ENCODE measurements at regions of chr11 and their contacts with region 1.

Region 1: DNA sequence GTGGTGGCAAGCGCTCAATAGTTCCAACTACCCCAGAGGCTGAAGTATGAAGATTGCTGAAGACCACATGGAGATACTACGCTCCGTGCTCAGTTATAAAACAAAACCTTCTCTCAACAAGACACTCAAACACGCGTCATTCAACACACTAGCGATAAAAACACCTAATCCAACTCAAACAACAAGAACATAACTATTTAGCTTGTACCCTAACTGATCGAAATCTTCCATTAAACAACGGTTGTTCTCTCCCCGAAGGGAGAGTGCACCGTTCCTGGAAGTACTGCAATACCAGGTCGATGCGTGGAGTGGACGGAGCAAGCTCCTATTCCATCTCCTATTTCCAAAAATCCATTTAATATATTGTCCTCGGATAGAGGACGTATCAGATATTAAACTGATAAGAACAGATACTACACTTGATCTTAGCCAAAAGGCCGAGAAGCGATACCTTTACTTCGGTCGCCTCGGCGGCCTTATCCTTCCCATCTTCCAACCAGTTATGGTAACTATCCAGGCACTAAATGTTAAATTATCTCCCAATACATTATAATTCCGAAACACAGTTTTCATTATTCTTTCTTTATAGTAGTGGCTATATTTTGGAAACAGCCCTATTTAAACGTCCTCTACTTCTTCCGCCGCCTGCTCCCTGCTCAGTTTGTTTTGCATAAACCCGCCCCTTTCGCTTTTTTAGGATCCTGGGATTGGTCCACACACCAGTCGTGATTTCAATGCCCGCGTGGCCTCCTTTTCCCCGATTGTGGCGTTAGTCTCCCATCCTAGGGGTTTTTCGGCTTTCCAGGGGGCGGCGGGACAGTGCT is 2.2 kb upstream of the WDR74 start:
- DNase-seq: peak; percentile 92 to 100
- H3K4me3 ChIP-seq: peak overlapping the region; percentile 89
- H3K27ac ChIP-seq: peak overlapping the region; percentile 94
- H3K4me1 ChIP-seq: peaks cover 17% of the 10 kb centered on the region
- H3K27me3 ChIP-seq: no peaks in the 10 kb centered on the region
- CTCF ChIP-seq: no peak

Region 2: DNA sequence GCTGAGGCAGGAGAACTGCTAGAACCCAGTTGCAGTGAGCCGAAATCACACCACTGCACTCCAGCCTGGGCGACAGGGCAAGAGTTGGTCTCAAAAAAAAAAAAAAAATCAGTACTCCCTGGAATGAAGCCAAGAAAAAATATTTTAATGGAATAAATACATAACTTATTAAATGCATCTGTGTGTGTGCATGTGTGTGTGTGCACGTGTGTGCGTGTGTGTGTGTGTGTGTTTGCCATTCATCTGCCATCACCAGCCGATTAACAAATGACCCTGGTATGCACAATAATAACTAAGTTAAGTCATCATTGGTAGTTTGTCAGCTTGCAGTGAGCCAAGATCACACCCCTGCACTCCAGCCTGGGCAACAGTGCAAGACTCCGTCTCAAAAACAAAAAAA is 457.8 kb before region 1 on chr11:
- CTCF ChIA-PET with region 1: no interaction called
- POLR2A ChIA-PET with region 1: no interaction called
- intact Hi-C with region 1: loop called (anchors 2 kb)
- DNase-seq: no peak
- H3K4me3 ChIP-seq: no peak overlapping the region
- H3K27ac ChIP-seq: no peak overlapping the region
- H3K4me1 ChIP-seq: no peaks in the 10 kb centered on the region; the same call in none of the 2 replicates
- H3K27me3 ChIP-seq: no peaks in the 10 kb centered on the region
- CTCF ChIP-seq: no peak

Region 3: GRCh38 chr11:62573592-62574362 is 267.8 kb before region 1 on chr11 and contains the start of gene EEF1G:
- CTCF ChIA-PET with region 1: no interaction called
- POLR2A ChIA-PET with region 1: interaction called, 10 read pairs
- intact Hi-C with region 1: no loop called
- DNase-seq: peak; percentile 100
- H3K4me3 ChIP-seq: peak within 1 kb of the TSS; percentile 92
- H3K27ac ChIP-seq: peak within 1 kb of the TSS; percentile 86
- H3K4me1 ChIP-seq: peaks cover 42% of the 10 kb centered on the region
- H3K27me3 ChIP-seq: no peaks in the 10 kb centered on the region
- CTCF ChIP-seq: no peak
- total RNA-seq, gene EEF1G: 1,773 and 2,008 TPM in 2 replicates

Region 4: GRCh38 chr11:62705880-62706849 is 135.4 kb before region 1 on chr11:
- CTCF ChIA-PET with region 1: no interaction called
- POLR2A ChIA-PET with region 1: interaction called, 5 read pairs
- intact Hi-C with region 1: loop called (anchors 5 kb)
- DNase-seq: peak; percentile 82 to 96
- H3K4me3 ChIP-seq: peak overlapping the region; percentile 89
- H3K27ac ChIP-seq: peak overlapping the region; percentile 79
- H3K4me1 ChIP-seq: peaks cover 30% of the 10 kb centered on the region
- H3K27me3 ChIP-seq: no peaks in the 10 kb centered on the region
- CTCF ChIP-seq: no peak

Region 5: DNA sequence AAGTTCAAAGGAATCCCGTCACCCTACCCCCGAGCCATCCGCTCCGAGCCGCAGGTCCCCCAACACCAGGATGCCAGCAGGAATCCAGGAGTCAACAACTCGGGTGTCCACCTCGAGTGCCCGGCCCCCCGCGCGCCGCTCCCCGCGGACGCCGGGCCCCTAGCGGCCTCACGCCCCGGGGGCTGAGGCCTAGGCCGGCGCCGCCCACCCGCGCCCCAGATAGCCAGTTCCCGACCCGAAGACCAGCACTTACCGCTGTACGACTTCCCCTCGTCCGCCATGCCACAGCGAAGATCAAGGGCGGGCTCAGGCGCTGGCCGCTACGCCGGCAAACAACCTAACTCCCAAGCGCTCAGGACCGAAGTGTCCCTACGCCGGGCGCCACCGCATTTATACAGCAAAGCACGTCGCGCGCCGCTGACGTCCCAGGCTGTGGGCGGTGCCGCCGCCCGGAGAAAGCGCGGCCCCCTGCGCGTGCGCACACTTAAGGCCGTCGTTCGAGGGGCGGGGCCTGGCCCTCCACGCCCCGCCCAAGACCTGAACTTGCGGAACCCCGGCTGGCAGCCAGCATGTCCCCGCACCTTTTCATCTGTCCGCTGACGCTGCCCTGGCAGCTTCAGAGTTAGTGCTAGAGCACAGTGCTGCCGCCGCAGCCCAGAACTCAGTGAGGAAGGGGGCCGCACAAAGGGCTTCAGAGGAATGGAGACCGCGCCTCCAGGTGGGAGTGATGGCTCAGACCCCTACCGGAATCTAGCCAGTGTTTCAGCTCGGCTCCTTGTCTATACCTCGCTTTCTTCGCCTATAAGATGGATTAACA is 36.3 kb before region 1 on chr11 and contains the start of gene NXF1:
- CTCF ChIA-PET with region 1: interaction called, 3 read pairs
- POLR2A ChIA-PET with region 1: interaction called, 20 read pairs
- intact Hi-C with region 1: no loop called
- DNase-seq: peak; percentile 87 to 98
- H3K4me3 ChIP-seq: peak within 1 kb of the TSS; percentile 94
- H3K27ac ChIP-seq: peak within 1 kb of the TSS; percentile 16
- H3K4me1 ChIP-seq: peaks cover 20% of the 10 kb centered on the region
- H3K27me3 ChIP-seq: no peaks in the 10 kb centered on the region
- CTCF ChIP-seq: no peak
- total RNA-seq, gene NXF1: 45.6 and 56.1 TPM in 2 replicates

Region 6: DNA sequence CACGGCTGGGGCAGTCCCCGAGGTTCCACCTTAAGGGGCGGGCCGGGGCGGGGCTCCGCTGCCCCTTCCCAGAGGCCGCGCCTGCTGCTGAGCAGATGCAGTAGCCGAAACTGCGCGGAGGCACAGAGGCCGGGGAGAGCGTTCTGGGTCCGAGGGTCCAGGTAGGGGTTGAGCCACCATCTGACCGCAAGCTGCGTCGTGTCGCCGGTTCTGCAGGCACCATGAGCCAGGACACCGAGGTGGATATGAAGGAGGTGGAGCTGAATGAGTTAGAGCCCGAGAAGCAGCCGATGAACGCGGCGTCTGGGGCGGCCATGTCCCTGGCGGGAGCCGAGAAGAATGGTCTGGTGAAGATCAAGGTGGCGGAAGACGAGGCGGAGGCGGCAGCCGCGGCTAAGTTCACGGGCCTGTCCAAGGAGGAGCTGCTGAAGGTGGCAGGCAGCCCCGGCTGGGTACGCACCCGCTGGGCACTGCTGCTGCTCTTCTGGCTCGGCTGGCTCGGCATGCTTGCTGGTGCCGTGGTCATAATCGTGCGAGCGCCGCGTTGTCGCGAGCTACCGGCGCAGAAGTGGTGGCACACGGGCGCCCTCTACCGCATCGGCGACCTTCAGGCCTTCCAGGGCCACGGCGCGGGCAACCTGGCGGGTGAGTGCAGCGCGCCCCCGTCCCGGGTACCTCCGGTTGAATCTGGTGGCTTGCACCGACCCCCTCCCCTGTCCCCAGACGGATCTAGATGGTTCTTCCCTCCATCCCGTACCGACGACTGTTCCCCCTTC is 39.4 kb after region 1 on chr11 and contains the start of gene SLC3A2:
- CTCF ChIA-PET with region 1: interaction called, 6 read pairs
- POLR2A ChIA-PET with region 1: interaction called, 10 read pairs
- intact Hi-C with region 1: loop called (anchors 1 kb)
- DNase-seq: peak; percentile 85 to 90
- H3K4me3 ChIP-seq: peak within 1 kb of the TSS; percentile 69
- H3K27ac ChIP-seq: peak within 1 kb of the TSS; percentile 96
- H3K4me1 ChIP-seq: peaks cover 48% of the 10 kb centered on the region
- H3K27me3 ChIP-seq: no peaks in the 10 kb centered on the region
- CTCF ChIP-seq: peak; percentile 68
- total RNA-seq, gene SLC3A2: 513 and 619 TPM in 2 replicates